ENCODE measurements at regions of chr1 and their contacts with region 1.

Region 1: DNA sequence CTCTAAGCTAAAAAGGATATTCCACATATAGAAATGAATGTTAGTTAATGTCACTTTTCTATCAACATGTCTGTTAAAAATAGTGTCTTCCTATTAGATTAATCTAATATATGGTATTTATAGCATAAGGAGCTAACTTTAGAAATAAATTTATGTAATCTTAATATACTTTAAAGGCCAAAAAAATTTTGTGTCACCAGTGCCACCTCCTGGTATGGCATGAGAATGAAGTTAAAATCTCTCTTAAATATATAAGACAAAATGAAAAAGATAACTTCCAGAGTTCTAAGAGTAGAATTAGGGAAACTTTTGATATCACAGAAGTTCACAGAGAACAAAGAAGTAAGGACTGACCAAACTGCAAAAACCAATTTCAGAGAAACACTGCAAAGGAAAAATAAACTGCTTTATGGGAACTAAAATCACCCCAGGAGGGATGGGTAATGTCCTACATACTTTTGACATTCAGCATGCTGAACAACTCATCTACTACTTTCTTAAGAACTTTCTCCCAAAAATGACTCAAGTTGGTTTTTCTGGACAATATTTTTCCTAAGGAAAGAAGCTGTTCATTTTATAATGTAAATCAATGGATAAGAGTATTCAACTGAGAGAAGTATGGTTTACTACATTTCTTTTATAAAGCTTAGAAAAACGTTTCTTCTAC is 82.8 kb downstream of the TRIM33 start:
- DNase-seq: peak; percentile 8
- ATAC-seq: no peak
- H3K4me3 ChIP-seq: no peak overlapping the region
- H3K4me3 Mint-ChIP-seq: no peak overlapping the region
- H3K27ac ChIP-seq: peak overlapping the region in 1 of 2 donors; percentile 30
- H3K27ac Mint-ChIP-seq: no peak overlapping the region
- H3K4me1 ChIP-seq: no peaks in the 10 kb centered on the region
- H3K4me1 Mint-ChIP-seq: peaks cover 2% of the 10 kb centered on the region
- H3K27me3 ChIP-seq: no peaks in the 10 kb centered on the region
- H3K27me3 Mint-ChIP-seq: no peaks in the 10 kb centered on the region
- CTCF ChIP-seq: peak; percentile 63

Region 2: GRCh38 chr1:114009393-114009792 is 418.8 kb before region 1 on chr1:
- CTCF ChIA-PET with region 1: no interaction called
- POLR2A ChIA-PET with region 1: no interaction called
- intact Hi-C with region 1: no loop called
- DNase-seq: no peak
- ATAC-seq: no peak
- H3K4me3 ChIP-seq: no peak overlapping the region
- H3K4me3 Mint-ChIP-seq: no peak overlapping the region
- H3K27ac ChIP-seq: no peak overlapping the region
- H3K27ac Mint-ChIP-seq: no peak overlapping the region
- H3K4me1 ChIP-seq: no peaks in the 10 kb centered on the region
- H3K4me1 Mint-ChIP-seq: no peaks in the 10 kb centered on the region
- H3K27me3 ChIP-seq: peaks cover 0 to 4% (median under 1%) of the 10 kb centered on the region in 4 experiments
- H3K27me3 Mint-ChIP-seq: peaks cover 17% of the 10 kb centered on the region
- CTCF ChIP-seq: no peak

Region 3: DNA sequence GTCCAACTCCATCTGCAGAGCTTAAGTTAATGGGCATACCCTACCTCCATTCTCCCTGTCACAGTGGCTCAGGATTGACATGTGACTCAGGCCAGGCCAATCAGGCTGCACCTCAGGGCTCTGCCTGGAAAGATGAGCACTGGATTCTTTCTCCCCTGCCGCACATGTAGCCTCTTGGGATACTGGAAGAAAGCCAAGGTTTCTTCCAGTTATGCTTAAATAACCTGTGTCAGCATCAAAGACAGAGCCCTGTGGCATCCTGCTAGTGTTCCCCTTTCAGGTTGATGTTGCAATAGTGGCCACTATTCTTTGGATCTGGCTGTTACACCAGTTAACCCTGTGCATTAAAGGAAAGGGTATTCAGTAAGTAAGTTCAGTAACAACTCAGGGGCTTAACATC is 219.5 kb before region 1 on chr1:
- CTCF ChIA-PET with region 1: no interaction called
- POLR2A ChIA-PET with region 1: no interaction called
- intact Hi-C with region 1: no loop called
- DNase-seq: no peak
- ATAC-seq: no peak
- H3K4me3 ChIP-seq: no peak overlapping the region
- H3K4me3 Mint-ChIP-seq: no peak overlapping the region
- H3K27ac ChIP-seq: no peak overlapping the region
- H3K27ac Mint-ChIP-seq: no peak overlapping the region
- H3K4me1 ChIP-seq: no peaks in the 10 kb centered on the region
- H3K4me1 Mint-ChIP-seq: no peaks in the 10 kb centered on the region
- H3K27me3 ChIP-seq: peaks cover 0 to 16% (median 1%) of the 10 kb centered on the region in 4 experiments
- H3K27me3 Mint-ChIP-seq: peaks cover 70% of the 10 kb centered on the region
- CTCF ChIP-seq: no peak

Region 4: GRCh38 chr1:114558544-114558943 is 130.3 kb after region 1 on chr1:
- CTCF ChIA-PET with region 1: interaction called, 3 read pairs
- POLR2A ChIA-PET with region 1: no interaction called
- intact Hi-C with region 1: loop called (anchors 5 kb)
- DNase-seq: peak; percentile 49
- ATAC-seq: peak; percentile 63
- H3K4me3 ChIP-seq: peak overlapping the region in 1 of 5 experiments; percentile 3
- H3K4me3 Mint-ChIP-seq: peak overlapping the region; percentile 3
- H3K27ac ChIP-seq: peak overlapping the region in 1 of 2 donors; percentile 21
- H3K27ac Mint-ChIP-seq: peak overlapping the region; percentile 16
- H3K4me1 ChIP-seq: peaks cover 31% of the 10 kb centered on the region in 2 donors
- H3K4me1 Mint-ChIP-seq: peaks cover 31% of the 10 kb centered on the region
- H3K27me3 ChIP-seq: no peaks in the 10 kb centered on the region
- H3K27me3 Mint-ChIP-seq: no peaks in the 10 kb centered on the region
- CTCF ChIP-seq: peak; percentile 75

Region 5: DNA sequence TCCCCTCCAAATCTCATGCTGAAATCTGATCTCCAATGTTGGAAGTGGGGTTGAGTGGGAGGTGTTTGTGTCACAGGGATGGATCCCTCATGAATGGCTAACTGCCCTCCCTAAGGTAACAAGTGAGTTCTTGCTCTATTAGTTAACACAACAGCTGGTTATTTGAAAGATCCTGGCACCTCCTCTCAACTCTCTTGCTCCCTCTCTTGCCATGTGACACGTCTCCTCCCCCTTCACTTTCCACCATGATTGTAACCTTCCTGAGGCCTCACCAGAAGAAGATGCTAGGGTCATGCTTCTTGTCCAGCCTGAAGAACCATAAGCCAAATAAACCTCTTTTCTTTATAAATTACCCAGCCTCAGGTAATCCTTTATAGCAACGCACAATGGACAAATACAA is 213.2 kb after region 1 on chr1:
- CTCF ChIA-PET with region 1: no interaction called
- POLR2A ChIA-PET with region 1: no interaction called
- intact Hi-C with region 1: no loop called
- DNase-seq: no peak
- ATAC-seq: no peak
- H3K4me3 ChIP-seq: no peak overlapping the region
- H3K4me3 Mint-ChIP-seq: no peak overlapping the region
- H3K27ac ChIP-seq: no peak overlapping the region
- H3K27ac Mint-ChIP-seq: no peak overlapping the region
- H3K4me1 ChIP-seq: no peaks in the 10 kb centered on the region
- H3K4me1 Mint-ChIP-seq: no peaks in the 10 kb centered on the region
- H3K27me3 ChIP-seq: no peaks in the 10 kb centered on the region
- H3K27me3 Mint-ChIP-seq: peaks cover 11% of the 10 kb centered on the region
- CTCF ChIP-seq: no peak

Measured in B cell (primary cell).